ENCODE measurements at regions of chr9 and their contacts with region 1.

Region 1: DNA sequence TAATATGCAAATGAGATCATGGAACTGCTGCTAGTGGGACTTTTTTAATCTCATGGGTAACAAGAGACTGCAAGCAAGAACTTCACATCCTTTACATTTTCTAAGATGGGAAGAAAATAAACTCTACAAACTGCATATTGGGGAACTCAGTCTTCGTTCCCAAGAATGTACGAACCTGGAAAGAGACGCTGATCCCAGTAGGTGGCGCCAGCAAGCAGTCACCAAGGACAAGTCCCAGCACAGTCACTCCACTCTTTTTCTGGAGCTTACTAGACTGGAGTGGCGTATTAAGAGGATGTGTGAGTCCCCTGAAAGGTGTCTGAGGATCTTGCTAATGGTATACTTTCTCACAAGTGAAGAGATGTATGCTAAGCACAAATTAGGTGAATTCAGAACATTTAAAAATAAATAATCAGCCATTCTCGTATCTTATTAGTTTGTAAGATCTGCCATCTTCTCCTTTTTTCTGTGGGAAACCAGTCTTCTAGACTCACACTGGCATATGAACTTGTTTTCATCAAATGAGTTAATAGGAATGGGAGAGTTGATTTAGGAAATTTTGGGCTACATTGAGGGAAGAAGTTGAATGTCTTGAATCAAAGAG is 16.0 kb upstream of the PUM3 start:
- DNase-seq: no peak
- H3K4me3 ChIP-seq: no peak overlapping the region
- H3K27ac ChIP-seq: no peak overlapping the region
- H3K4me1 ChIP-seq: no peaks in the 10 kb centered on the region
- H3K27me3 ChIP-seq: no peaks in the 10 kb centered on the region
- CTCF ChIP-seq: peak in 2 of 3 experiments; percentile 24 to 39
- POLR2A ChIP-seq: no peak

Region 2: GRCh38 chr9:3177936-3178335 is 318.1 kb after region 1 on chr9:
- intact Hi-C with region 1: loop called (anchors 10 kb)
- DNase-seq: no peak
- H3K4me3 ChIP-seq: no peak overlapping the region
- H3K27ac ChIP-seq: no peak overlapping the region
- H3K4me1 ChIP-seq: peaks cover 13% of the 10 kb centered on the region
- H3K27me3 ChIP-seq: no peaks in the 10 kb centered on the region
- CTCF ChIP-seq: no peak
- POLR2A ChIP-seq: no peak